Activated T-helper 2 cell treated with anti-CD3 and anti-CD28 coated beads, Interferon-gamma antibody, Interleukin-2, Interleukin-4, amounts not matched to agents 10 μg/mL and 5 μg/mL and 100 μg/mL, durations not matched to agents 14 hours and 24 hours and 36 hours (primary cell): ENCODE measurements at regions of chr2 and their contacts with region 1.

Region 1: DNA sequence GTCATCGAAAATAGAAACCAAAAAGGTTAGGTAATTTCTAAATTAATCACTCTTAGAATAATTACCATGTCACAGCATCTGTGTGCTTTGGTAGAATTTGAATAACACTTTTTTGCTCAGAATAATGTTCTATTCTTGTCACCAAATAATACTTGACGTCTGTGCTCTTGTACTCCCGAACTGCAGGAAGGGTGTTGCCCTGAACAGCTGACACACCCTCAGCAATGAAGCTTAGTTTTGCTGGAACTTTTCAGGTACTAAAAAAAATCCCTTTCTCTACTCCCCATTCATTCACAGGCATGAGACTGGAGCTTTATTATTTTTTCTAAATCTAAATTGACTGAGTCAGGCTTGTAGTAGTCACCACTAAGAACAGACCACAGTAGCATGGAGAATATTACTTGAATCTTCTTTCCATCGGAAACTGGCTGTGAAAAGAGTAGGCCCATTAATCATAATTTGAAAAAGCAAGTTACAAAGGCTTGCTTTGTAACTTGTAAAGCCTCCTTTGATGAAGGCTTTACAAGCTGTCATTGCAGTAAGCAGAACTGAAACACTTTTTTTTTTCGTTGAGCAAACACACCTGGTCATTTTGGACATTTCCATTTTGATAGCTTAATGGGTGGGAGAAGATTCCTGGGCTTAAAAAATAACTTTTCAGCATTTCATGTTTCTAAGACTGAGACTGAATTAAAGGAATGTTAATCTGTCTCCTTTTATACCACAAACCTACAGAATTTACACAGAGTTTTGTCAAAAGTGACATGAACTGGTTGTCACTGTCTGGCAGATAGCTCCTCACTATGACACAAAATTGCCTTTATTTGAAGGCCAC is 70.3 kb upstream of the PELI1 start:
- DNase-seq: no peak
- H3K4me3 Mint-ChIP-seq: peak overlapping the region; percentile 50
- H3K27ac Mint-ChIP-seq: peak overlapping the region; percentile 95
- H3K4me1 Mint-ChIP-seq: peaks cover 44% of the 10 kb centered on the region
- H3K27me3 Mint-ChIP-seq: no peaks in the 10 kb centered on the region

Region 2: GRCh38 chr2:64036034-64036705 is 178.3 kb before region 1 on chr2:
- intact Hi-C with region 1: loop called (anchors 1 kb)
- DNase-seq: peak; percentile 30
- H3K4me3 Mint-ChIP-seq: peak overlapping the region; percentile 19
- H3K27ac Mint-ChIP-seq: peak overlapping the region; percentile 87
- H3K4me1 Mint-ChIP-seq: peaks cover 48% of the 10 kb centered on the region
- H3K27me3 Mint-ChIP-seq: no peaks in the 10 kb centered on the region

Region 3: GRCh38 chr2:64114063-64114911 is 100.2 kb before region 1 on chr2:
- intact Hi-C with region 1: loop called (anchors 1 kb)
- DNase-seq: no peak
- H3K4me3 Mint-ChIP-seq: peak overlapping the region; percentile 6
- H3K27ac Mint-ChIP-seq: peak overlapping the region; percentile 74
- H3K4me1 Mint-ChIP-seq: peaks cover 55% of the 10 kb centered on the region
- H3K27me3 Mint-ChIP-seq: peaks cover 2% of the 10 kb centered on the region

Region 4: GRCh38 chr2:64144057-64145013 is 70.2 kb before region 1 on chr2 and contains the start of gene PELI1:
- intact Hi-C with region 1: loop called (anchors 1 kb)
- DNase-seq: peak; percentile 89
- H3K4me3 Mint-ChIP-seq: peak within 1 kb of the TSS; percentile 89
- H3K27ac Mint-ChIP-seq: peak within 1 kb of the TSS; percentile 91
- H3K4me1 Mint-ChIP-seq: peaks cover 23% of the 10 kb centered on the region
- H3K27me3 Mint-ChIP-seq: no peaks in the 10 kb centered on the region
- total RNA-seq, gene PELI1: 21.6 and 25.1 TPM in 2 replicates

Region 5: GRCh38 chr2:64203858-64204632 is 10.5 kb before region 1 on chr2:
- intact Hi-C with region 1: loop called (anchors 1 kb)
- DNase-seq: no peak
- H3K4me3 Mint-ChIP-seq: peak overlapping the region; percentile 42
- H3K27ac Mint-ChIP-seq: peak overlapping the region; percentile 78
- H3K4me1 Mint-ChIP-seq: peaks cover 50% of the 10 kb centered on the region
- H3K27me3 Mint-ChIP-seq: no peaks in the 10 kb centered on the region

Region 6: GRCh38 chr2:64260817-64261216 is 46.3 kb after region 1 on chr2:
- intact Hi-C with region 1: no loop called
- DNase-seq: no peak
- H3K4me3 Mint-ChIP-seq: no peak overlapping the region
- H3K27ac Mint-ChIP-seq: no peak overlapping the region
- H3K4me1 Mint-ChIP-seq: peaks cover 7% of the 10 kb centered on the region
- H3K27me3 Mint-ChIP-seq: peaks cover 12% of the 10 kb centered on the region

Region 7: GRCh38 chr2:64538764-64539433 is 324.4 kb after region 1 on chr2:
- intact Hi-C with region 1: loop called (anchors 5 kb)
- DNase-seq: no peak
- H3K4me3 Mint-ChIP-seq: peak overlapping the region; percentile 31
- H3K27ac Mint-ChIP-seq: peak overlapping the region; percentile 59
- H3K4me1 Mint-ChIP-seq: peaks cover 66% of the 10 kb centered on the region
- H3K27me3 Mint-ChIP-seq: no peaks in the 10 kb centered on the region

Region 8: GRCh38 chr2:64978514-64979268 is 764.2 kb after region 1 on chr2:
- intact Hi-C with region 1: loop called (anchors 5 kb)
- DNase-seq: no peak
- H3K4me3 Mint-ChIP-seq: no peak overlapping the region
- H3K27ac Mint-ChIP-seq: no peak overlapping the region
- H3K4me1 Mint-ChIP-seq: peaks cover 49% of the 10 kb centered on the region
- H3K27me3 Mint-ChIP-seq: peaks cover 10% of the 10 kb centered on the region